ENCODE measurements at regions of chr13 and their contacts with region 1.

Region 1: DNA sequence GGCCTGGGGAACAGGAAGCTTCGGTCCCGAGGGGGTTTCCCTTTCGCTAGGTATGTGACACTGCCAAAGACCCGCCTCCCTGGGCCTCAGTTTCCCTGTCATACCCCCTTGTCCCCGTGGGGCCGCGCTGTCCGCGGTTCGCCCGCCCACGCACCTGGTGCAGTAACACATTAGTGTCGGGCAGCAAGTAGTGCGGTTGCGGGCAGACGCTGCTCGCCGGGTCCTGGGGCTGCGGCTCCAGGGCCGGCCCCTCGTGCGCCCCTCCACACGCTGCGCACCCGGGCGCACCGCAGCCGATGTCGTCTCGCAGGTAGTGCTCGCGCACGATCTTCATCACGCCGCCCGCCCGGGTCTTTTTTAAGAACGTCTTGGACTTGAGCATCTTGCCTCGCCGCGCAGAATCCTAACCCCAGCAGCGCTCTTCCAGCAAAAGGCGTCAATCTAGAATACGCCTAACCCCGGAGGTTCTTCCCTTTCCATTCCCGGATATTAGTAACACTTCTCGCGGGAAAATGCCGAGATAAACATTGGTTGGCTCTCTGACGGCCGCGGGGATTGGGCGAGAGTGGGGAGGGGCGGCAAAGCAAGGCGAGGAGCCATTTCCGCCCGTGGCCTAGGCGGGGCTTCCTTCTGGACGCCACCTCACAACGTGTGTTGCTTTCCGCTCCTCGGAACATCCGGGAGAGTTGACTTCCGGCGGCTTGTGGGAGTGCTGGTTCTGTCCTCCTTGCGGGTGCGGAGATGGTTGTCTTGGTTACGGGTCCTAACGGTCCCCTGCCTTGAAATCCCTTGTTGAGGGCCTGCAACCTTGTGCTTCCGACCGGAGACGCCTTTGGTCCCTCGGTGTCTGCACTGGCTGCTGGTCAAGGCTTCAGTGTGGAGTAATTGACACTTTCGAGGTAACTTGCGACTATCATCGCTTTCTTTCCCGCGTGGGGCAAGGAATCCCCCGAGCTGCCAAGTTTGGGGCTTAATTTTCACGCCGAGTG is at the starts of genes DIS3 and PIBF1:
- DNase-seq: peak; percentile 89 to 98 (median 98)
- H3K4me3 ChIP-seq: peak within 1 kb of the TSS; percentile 61 to 100 (median 96)
- H3K27ac ChIP-seq: peak within 1 kb of the TSS in 52 of 59 donors; percentile 15 to 92 (median 75)
- H3K27me3 ChIP-seq: no peaks in the 10 kb centered on the region
- CTCF ChIP-seq: peak in 21 of 56 donors; percentile 4 to 54 (median 21)
- total RNA-seq, gene DIS3: 17.1 to 33.3 (median 24.6) TPM
- total RNA-seq, gene PIBF1: 11.8 to 33.0 (median 22.4) TPM

Region 2: DNA sequence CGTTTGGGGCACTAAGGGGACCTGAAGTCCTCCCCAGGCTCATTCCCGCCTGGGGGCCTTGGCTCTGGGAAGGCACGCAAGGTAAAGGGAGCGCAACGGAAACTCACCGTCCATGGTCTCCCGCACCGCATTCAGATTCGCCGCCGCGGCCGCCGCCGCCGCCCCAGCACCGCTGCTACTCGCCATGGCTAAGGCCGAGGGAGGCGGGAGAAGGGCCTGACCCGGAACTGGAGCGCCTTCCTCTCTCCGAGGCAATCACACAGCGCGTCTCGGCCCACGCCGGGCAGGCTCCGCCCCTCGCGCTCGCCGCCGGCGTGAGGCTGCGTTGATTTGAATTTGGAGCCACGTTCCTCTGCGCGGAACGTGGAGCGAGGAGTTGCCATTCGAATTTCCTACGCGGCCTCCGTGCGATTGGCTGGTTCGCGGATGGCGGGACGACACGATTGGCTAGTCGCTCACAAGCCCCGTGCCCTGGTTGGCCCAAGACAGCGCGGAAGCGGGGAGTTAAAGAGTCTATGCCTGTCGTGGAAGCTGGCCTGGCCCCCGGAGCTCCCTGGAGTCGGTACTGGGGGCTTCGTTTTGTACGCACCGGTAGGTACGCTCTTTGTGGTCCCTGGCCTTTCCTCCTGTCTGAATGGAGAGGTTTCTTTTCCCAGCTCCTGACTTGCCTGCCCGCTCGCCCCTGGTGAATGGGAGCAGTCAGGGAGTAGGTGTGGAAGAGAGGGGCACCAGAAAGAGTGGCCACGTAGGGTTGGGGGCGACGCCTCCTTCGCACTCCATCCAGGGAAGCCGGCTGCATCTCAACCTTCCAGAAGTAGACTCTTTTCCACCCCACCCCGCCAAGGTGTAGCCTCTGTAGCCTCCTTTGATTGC is 54.1 kb before region 1 on chr13 and contains the starts of genes BORA and MZT1:
- intact Hi-C with region 1: loop called (anchors 2 to 5 kb)
- DNase-seq: peak; percentile 80 to 95 (median 92)
- H3K4me3 ChIP-seq: peak within 1 kb of the TSS; percentile 68 to 100 (median 95)
- H3K27ac ChIP-seq: peak within 1 kb of the TSS in 28 of 59 donors; percentile 11 to 90 (median 48)
- H3K27me3 ChIP-seq: no peaks in the 10 kb centered on the region
- CTCF ChIP-seq: peak in 18 of 56 donors; percentile 6 to 40 (median 24)
- total RNA-seq, gene BORA: 0.38 to 4.4 (median 1.7) TPM
- total RNA-seq, gene MZT1: 6.7 to 29.0 (median 16.5) TPM